ENCODE measurements at regions of chr1 and their contacts with region 1.

Region 1: DNA sequence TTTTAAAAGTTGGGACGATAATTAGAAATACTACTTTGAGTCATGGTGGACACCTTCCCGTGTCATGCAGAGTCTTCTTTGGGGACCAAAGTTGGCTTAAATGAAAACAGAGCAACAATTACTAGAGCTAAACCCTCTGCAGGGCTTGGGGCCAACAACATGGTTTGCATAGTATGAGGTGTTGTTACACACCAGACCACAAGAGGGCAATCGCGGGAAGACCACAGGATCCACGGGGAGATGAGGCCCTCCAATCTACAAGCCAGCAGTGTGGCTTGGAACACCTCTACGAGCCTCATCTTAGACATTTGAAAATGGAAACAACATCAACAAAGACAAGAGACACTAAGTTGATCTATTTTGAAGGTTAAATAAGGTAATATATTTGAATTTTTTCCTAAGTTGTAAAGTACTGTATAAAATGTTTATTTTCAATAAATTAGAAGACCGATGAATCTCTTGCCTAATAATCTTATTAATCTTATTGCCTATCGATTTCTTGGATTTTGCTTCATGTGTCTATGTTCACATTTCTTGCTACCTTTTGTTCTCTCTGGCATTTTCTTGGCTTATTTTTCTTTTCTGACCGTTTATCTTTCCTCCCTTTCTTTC is 8.2 kb upstream of the SMCP start:
- DNase-seq: peak; percentile 52 to 79 (median 69)
- H3K4me3 ChIP-seq: no peak overlapping the region
- H3K27ac ChIP-seq: no peak overlapping the region
- H3K4me1 ChIP-seq: no peaks in the 10 kb centered on the region
- H3K27me3 ChIP-seq: peaks cover 0 to 3% (median 0%) of the 10 kb centered on the region in 5 experiments

Region 2: GRCh38 chr1:152823291-152823690 is 46.6 kb before region 1 on chr1:
- CTCF ChIA-PET with region 1: no interaction called
- POLR2A ChIA-PET with region 1: no interaction called
- DNase-seq: no peak
- H3K4me3 ChIP-seq: no peak overlapping the region
- H3K27ac ChIP-seq: no peak overlapping the region
- H3K4me1 ChIP-seq: no peaks in the 10 kb centered on the region
- H3K27me3 ChIP-seq: peaks cover 0 to 13% (median 8%) of the 10 kb centered on the region in 5 experiments

Region 3: DNA sequence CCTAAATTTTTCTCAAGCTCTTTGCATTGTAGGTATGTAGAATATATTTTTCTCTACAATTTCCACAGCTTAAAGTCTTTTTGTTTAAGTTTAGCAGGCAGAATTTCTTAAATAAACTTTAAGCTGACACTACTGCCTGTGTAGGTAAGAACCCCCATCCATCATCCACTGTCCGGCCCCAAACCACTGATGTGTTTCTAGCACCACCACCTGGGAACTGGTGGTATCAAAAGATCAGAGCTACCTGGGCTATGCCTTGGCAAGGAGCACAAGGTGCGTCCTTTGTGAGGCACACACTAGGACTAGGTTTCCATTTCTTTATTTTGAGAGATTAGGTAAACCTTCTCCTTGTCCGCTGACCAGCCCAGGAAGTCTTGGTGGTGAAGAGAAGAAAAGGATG is 322.8 kb after region 1 on chr1:
- CTCF ChIA-PET with region 1: interaction called, 13 read pairs
- POLR2A ChIA-PET with region 1: no interaction called
- DNase-seq: peak in 1 of 3 donors; percentile 3
- H3K4me3 ChIP-seq: no peak overlapping the region
- H3K27ac ChIP-seq: no peak overlapping the region
- H3K4me1 ChIP-seq: peaks cover 0 to 5% (median 0%) of the 10 kb centered on the region in 4 experiments
- H3K27me3 ChIP-seq: peaks cover 0 to 20% (median 8%) of the 10 kb centered on the region in 5 experiments

Region 4: GRCh38 chr1:153220606-153221303 is 350.8 kb after region 1 on chr1:
- CTCF ChIA-PET with region 1: interaction called, 21 read pairs
- POLR2A ChIA-PET with region 1: no interaction called
- DNase-seq: peak; percentile 7 to 42 (median 25)
- H3K4me3 ChIP-seq: no peak overlapping the region
- H3K27ac ChIP-seq: no peak overlapping the region
- H3K4me1 ChIP-seq: no peaks in the 10 kb centered on the region
- H3K27me3 ChIP-seq: peaks cover 0 to 4% (median 0%) of the 10 kb centered on the region in 5 experiments

Measured in common myeloid progenitor, CD34-positive (primary cell).